ENCODE measurements at regions of chr6 and their contacts with region 1.

Region 1: DNA sequence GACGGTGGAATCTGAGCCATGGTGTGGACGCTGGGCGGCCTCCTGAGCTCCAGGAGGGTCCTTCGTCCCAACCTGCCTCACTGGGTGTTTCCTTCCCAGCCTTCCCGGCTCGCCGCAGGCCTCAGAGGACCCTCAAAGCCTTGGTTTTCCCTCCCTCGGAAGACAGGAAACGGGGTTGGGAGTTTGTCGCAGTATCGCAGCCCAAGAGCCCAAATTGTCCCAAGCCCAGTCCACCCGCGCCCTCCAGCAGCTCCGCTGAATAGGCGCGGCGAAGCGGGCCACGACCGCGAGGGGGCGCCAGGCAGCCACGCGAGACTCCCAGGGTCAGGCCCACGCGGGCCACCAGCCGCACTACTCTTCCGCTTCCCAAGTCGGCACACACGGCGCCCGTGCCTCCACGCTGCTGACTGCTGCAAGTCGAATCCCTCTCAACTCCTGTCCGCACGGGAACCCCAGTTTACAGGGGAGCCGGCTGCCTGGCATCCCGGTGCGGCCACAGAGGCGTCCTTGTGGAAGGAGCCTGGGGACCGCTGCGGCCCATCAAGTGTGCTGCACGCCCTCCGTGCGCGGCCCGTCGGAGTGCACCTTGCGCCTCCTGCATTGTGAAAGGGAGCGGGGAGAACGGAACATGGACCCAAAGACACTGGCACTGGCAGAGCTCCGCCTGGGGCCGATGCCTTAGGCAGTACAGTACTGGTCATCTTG is 40.4 kb upstream of the HMGA1 start:
- DNase-seq: peak; percentile 90 to 94
- ATAC-seq: peak; percentile 97 to 100 (median 99)
- H3K4me3 ChIP-seq: peak overlapping the region; percentile 73
- H3K27ac ChIP-seq: no peak overlapping the region
- H3K4me1 ChIP-seq: no peaks in the 10 kb centered on the region
- H3K27me3 ChIP-seq: peaks cover 0 to 2% (median 0%) of the 10 kb centered on the region in 3 donors
- CTCF ChIP-seq: peak; percentile 98

Region 2: DNA sequence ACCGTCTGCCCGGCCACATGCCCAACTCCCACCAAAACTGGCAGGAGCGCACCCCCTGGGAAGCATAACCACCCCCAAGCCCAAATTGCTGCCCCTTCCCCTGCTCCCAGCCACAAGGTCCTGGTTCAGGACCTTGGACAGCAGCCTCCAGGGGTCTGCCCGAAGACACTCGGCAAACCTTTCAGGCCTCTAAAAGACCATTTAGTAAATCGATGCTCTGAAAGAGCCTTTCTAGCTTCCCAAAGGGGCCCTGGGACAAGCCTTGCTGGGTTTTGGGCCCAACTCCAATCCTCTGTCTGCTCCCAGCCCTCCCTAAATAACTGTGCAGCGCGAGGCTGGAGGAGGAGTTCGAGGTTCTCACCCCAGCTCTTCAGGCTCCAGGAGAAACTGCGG is 80.9 kb before region 1 on chr6:
- intact Hi-C with region 1: no loop called
- DNase-seq: no peak
- ATAC-seq: no peak
- H3K4me3 ChIP-seq: no peak overlapping the region
- H3K27ac ChIP-seq: no peak overlapping the region
- H3K4me1 ChIP-seq: no peaks in the 10 kb centered on the region
- H3K27me3 ChIP-seq: peaks cover 0 to 28% (median 5%) of the 10 kb centered on the region in 3 donors
- CTCF ChIP-seq: no peak

Region 3: DNA sequence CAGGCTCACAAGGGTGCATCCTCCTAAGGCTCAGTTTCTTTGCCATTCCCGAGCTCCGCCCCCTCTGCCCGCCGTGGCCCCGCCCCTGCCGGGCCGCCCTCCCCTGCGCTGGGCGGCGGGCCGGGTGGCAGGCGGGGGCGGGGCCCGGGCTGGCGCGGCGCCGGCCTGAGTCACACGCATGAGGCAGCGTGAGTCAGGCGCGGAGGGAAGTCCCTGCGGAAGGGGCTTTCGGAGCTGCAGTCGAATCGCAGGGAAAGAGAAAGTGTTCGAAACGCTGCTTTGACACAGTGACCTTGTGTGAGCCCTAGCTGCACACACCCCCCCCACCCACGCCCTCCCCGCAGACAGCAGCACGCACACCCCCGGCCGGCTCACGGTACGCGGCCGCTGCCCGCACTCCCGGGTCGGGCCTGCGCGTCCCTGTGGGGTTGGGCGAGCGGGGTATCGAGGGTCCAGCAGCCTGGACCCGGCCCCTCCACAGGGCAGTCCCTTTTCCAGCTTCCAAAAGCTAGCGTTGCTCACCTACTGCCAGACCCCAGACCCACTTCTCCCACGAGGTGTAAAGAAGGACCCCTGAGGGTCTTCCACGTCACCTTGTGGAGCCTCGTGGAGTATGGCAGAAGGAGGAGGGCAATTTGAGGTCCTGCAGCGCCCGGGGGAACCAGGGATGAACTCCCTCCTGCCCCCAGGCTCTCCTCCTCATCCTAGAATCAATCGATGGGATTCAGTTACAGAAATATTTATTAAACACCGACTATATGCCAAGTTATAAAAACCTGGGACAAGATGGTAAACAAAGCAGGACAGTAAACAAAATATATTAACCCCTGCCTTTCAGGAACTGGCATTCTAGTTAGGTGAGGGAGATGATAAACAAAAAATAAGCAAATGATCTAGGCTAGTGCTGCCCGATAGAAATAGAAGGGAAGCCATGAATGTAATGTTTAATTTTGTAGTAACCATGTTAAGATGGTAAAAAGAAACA is 28.0 kb after region 1 on chr6:
- intact Hi-C with region 1: loop called in 1 of 2 experiments (anchors 2 kb)
- DNase-seq: peak; percentile 93 to 96
- ATAC-seq: peak; percentile 96 to 98 (median 96)
- H3K4me3 ChIP-seq: peak overlapping the region; percentile 76
- H3K27ac ChIP-seq: peak overlapping the region; percentile 96
- H3K4me1 ChIP-seq: peaks cover 12% of the 10 kb centered on the region
- H3K27me3 ChIP-seq: no peaks in the 10 kb centered on the region
- CTCF ChIP-seq: no peak

Region 4: DNA sequence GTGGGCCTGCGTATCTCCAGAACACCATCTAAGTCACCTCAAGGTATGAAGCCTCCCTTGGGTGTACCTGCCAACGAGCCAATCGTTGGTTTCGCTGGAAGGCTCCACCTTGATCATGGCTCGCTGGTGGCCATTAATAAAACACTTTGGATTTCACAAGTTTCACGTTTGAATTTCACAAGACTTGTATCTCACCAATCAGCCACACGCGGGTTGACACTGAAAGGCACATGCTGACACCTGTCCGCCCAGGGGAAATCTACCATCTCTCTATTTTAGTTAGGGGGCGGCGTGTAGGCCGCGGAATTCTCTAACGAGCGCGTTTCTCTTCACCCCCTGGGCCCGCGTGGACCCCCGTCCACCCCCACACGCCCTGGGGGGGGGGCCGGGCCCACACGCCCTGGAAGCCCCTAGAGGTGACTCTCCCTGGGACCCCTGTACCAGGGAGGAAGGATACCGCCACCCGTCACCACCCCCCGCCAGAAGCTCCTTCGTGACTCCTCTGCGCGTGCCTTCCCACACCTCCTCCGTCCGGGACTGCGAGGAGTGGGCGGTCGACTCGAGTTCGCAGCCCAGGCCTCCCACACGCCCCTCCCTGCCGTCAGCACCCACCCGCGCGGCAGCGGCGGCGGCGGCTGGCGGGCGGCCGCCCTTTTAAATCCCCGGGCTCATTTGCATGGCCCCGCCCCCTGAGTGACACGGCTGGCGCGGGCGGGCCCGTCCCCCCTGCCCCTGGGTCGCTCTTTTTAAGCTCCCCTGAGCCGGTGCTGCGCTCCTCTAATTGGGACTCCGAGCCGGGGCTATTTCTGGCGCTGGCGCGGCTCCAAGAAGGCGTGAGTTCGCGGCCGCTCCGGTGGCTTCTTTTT is 40.1 kb after region 1 on chr6 and contains the start of gene HMGA1:
- intact Hi-C with region 1: loop called (anchors 5 kb)
- DNase-seq: peak; percentile 91 to 95
- ATAC-seq: peak; percentile 93 to 96 (median 95)
- H3K4me3 ChIP-seq: peak within 1 kb of the TSS; percentile 91
- H3K27ac ChIP-seq: peak within 1 kb of the TSS; percentile 96
- H3K4me1 ChIP-seq: no peaks in the 10 kb centered on the region
- H3K27me3 ChIP-seq: no peaks in the 10 kb centered on the region
- CTCF ChIP-seq: no peak
- total RNA-seq, gene HMGA1: 83.5 to 151 (median 128) TPM

Region 5: DNA sequence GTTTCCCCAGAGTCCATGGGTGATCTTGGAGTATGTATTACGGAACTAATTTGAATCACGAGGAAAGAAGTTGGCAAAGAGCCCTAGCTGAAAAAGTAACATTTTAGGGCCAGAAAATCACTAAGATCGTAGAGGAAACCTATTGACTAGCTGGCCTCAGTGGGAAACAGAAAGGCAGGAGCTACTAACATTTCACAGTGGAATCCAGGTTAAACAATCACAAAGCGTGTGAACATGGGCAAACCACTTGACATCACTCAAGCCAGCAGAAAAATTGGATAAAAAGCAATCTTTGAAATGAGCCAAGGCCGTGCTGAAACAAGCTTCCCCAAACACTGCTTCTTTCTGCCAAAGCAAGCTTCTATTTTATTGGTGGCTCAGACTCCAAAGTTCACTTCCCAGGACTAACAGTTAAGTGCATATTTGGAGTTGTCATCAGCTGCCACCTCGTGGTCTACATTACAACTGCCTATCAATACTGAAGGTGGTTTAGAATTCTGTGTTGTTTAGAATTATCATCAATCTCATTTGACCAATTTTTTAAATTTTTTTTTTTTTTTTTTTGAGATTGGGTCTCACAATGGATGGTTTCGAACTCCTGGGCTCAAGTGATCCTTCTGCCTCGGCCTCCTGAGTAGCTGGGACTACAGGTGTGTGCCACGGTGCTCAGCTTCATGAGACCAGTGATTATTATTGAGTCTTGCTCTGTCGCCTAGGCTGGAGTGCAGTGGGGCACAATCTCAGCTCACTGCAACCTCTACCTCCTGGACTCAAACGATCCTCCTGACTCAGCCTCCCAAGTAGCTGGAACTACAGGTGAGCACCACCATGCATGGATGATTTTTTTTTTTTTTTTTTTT is 219.0 kb after region 1 on chr6:
- intact Hi-C with region 1: loop called (anchors 2 kb)
- DNase-seq: no peak
- ATAC-seq: peak; percentile 82 to 92 (median 86)
- H3K4me3 ChIP-seq: no peak overlapping the region
- H3K27ac ChIP-seq: peak overlapping the region; percentile 63
- H3K4me1 ChIP-seq: peaks cover 7% of the 10 kb centered on the region
- H3K27me3 ChIP-seq: no peaks in the 10 kb centered on the region
- CTCF ChIP-seq: peak; percentile 66

Measured in psoas muscle (tissue), 8 donors.